Caco-2 (cell line): ENCODE measurements at regions of chr1 and their contacts with region 1.

Region 1: DNA sequence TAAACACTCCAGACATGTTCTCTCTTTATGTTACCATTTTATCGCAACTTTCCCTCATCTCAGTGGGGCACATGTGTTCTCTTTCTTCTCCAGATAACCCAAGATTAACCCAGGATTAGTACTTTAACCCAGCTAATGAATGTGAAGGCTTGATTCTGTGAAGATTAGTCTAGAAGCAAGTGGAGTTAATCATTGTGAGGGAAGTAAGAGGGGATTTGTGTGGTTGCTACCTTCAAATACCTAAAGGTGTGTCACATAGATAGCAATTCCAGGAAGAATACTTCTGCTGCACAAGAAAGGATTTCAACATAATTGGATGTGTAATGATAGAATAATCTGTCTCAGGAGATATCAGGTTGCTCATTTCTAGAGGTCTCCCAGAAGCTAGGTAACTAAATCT is 327.1 kb downstream of the PBX1 start:
- DNase-seq: peak; percentile 37 to 58
- H3K4me3 ChIP-seq: no peak overlapping the region
- H3K4me3 Mint-ChIP-seq: no peak overlapping the region
- H3K27ac Mint-ChIP-seq: no peak overlapping the region
- H3K4me1 ChIP-seq: peaks cover 12% of the 10 kb centered on the region
- H3K4me1 Mint-ChIP-seq: peaks cover 13% of the 10 kb centered on the region
- H3K27me3 ChIP-seq: no peaks in the 10 kb centered on the region
- H3K27me3 Mint-ChIP-seq: peaks cover 8% of the 10 kb centered on the region
- CTCF ChIP-seq: no peak

Region 2: DNA sequence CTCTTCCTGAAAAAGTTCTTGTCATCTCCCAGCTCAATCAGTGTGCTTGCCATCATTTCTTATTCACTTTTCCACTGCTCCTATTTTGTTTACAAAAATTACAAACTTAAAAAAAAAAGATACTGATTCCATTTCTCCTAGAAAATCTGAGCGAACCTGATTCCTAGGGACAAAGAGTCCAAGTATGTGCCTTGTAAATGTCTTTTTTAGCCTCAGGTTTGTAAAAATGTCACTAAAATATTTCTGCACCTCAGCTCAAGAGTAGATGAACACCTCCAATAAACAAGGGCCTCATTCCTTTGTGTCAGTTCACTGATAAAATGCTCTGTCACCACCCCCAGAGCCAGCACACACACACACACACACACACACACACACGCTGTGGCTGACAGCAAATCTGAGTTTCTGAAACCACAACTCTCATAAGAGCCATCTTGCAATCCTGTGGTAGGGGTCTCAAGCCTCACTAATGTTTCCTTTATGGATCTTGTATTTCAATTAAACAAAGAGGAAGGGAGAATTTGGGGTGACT is 27.9 kb before region 1 on chr1:
- CTCF ChIA-PET with region 1: no interaction called
- POLR2A ChIA-PET with region 1: no interaction called
- intact Hi-C with region 1: loop called (anchors 1 kb)
- DNase-seq: peak; percentile 70 to 85
- H3K4me3 ChIP-seq: no peak overlapping the region
- H3K4me3 Mint-ChIP-seq: peak overlapping the region; percentile 17
- H3K27ac Mint-ChIP-seq: peak overlapping the region; percentile 11
- H3K4me1 ChIP-seq: peaks cover 40% of the 10 kb centered on the region
- H3K4me1 Mint-ChIP-seq: peaks cover 22% of the 10 kb centered on the region
- H3K27me3 ChIP-seq: no peaks in the 10 kb centered on the region
- H3K27me3 Mint-ChIP-seq: no peaks in the 10 kb centered on the region
- CTCF ChIP-seq: no peak

Region 3: GRCh38 chr1:164868990-164869389 is 17.1 kb before region 1 on chr1:
- CTCF ChIA-PET with region 1: no interaction called
- POLR2A ChIA-PET with region 1: no interaction called
- intact Hi-C with region 1: no loop called
- DNase-seq: no peak
- H3K4me3 ChIP-seq: no peak overlapping the region
- H3K4me3 Mint-ChIP-seq: no peak overlapping the region
- H3K27ac Mint-ChIP-seq: no peak overlapping the region
- H3K4me1 ChIP-seq: no peaks in the 10 kb centered on the region
- H3K4me1 Mint-ChIP-seq: no peaks in the 10 kb centered on the region
- H3K27me3 ChIP-seq: no peaks in the 10 kb centered on the region
- H3K27me3 Mint-ChIP-seq: no peaks in the 10 kb centered on the region
- CTCF ChIP-seq: no peak

Region 4: DNA sequence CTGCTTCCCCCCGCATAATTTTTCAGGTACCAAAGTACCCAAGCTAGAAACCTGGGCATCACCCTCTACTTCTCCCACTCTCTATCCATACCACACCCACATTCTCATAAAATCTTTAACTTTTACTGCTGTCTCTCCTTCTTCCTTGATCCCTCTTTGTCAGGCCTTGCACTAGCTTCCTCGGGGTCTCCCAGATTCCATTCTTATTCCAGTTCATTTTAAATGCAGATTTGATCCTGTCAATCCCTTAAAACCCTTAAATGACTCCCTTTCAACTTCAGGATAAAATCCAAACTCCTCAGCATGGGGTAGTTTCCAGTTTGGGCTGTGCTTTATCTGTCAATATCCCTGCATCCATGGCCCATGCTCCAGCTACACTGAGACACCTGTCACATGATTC is 16.4 kb after region 1 on chr1:
- CTCF ChIA-PET with region 1: no interaction called
- POLR2A ChIA-PET with region 1: no interaction called
- intact Hi-C with region 1: no loop called
- DNase-seq: no peak
- H3K4me3 ChIP-seq: no peak overlapping the region
- H3K4me3 Mint-ChIP-seq: no peak overlapping the region
- H3K27ac Mint-ChIP-seq: no peak overlapping the region
- H3K4me1 ChIP-seq: no peaks in the 10 kb centered on the region; the same call in 1 of the 2 replicates
- H3K4me1 Mint-ChIP-seq: no peaks in the 10 kb centered on the region
- H3K27me3 ChIP-seq: no peaks in the 10 kb centered on the region
- H3K27me3 Mint-ChIP-seq: no peaks in the 10 kb centered on the region
- CTCF ChIP-seq: no peak

Region 5: GRCh38 chr1:165218731-165219130 is 332.6 kb after region 1 on chr1:
- CTCF ChIA-PET with region 1: no interaction called
- POLR2A ChIA-PET with region 1: no interaction called
- intact Hi-C with region 1: no loop called
- DNase-seq: no peak
- H3K4me3 ChIP-seq: no peak overlapping the region
- H3K4me3 Mint-ChIP-seq: no peak overlapping the region
- H3K27ac Mint-ChIP-seq: no peak overlapping the region
- H3K4me1 ChIP-seq: no peaks in the 10 kb centered on the region
- H3K4me1 Mint-ChIP-seq: no peaks in the 10 kb centered on the region
- H3K27me3 ChIP-seq: no peaks in the 10 kb centered on the region
- H3K27me3 Mint-ChIP-seq: peaks cover 6% of the 10 kb centered on the region
- CTCF ChIP-seq: no peak